AG04449 (cell line): ENCODE measurements at regions of chr16 and their contacts with region 1.

Region 1: DNA sequence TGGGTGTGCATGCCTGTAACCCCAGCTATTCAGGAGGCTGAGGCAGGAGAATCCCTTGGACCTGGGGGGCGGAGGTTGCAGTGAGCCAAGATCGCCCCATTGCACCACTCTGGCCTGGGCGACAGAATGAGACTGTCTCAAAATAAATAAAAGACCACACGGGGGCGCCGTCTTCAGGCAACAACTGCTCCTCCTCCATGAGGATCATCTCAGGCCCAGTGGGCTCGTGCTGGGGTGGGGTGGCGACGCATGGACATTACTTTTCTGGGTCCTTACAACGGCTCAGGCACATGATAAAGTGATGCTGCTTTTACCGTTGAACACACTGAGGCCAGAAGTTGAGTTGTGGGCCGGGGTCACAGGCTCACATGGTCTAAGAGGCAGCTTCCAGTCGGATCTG is 56.2 kb downstream of the PRMT7 start:
- DNase-seq: no peak
- H3K4me3 ChIP-seq: no peak overlapping the region
- CTCF ChIP-seq: peak; percentile 20

Region 2: DNA sequence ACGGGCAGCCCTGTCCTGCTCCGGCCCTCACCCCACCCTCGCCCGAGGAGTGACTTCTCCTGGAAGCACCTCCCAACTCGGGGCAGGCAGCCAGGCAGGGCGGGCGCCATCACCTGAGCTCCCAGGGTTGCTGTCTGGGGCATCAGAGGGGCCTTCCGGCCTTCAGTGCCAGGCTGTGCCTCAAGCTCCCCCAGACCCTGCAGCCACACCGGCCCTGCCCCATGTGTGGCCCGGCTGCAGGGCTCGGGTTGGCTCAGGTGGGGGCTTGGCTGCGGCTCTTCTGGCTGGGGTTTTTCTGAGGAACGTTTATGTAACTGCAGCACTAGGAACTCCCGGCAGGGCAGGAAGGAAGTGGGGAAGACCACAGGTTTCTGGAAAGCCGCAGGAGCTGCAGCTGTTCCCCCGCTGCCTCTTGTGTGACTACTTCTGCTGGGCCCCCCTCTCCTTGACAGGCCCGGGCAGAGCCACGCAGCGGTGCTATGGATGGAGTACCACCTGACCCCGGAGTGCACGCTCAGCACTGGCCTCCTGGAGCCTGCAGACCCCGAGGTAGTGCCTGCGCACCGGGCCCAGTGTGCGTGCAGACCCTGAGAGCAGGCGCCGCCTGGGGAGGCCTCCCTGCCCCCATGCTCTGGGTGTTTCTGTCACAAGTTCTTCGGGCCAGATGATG is 10.6 kb before region 1 on chr16:
- CTCF ChIA-PET with region 1: interaction called, 13 read pairs
- POLR2A ChIA-PET with region 1: no interaction called
- DNase-seq: no peak
- H3K4me3 ChIP-seq: no peak overlapping the region
- CTCF ChIP-seq: no peak

Region 3: DNA sequence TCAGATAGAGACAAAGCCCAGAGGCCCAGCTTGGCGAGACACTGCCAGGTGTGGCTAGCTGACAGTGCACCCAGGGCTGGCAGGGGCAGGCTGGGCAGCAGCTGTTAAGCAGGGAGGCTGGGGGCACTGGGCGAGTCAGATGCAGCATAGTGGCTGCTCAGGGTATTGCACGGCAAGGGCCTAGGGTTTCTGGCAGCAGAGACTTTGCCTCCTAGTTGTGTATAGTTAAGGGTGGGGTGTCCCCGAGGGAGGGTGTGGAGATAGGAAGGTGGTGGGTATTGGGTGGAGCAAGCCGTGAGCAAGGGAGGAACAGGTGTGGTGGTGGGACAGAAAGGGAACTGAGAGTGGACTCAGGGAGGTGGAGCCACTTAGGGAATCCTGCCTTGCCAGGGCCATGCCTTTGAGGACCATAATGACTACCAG is 15.3 kb after region 1 on chr16:
- CTCF ChIA-PET with region 1: interaction called, 13 read pairs
- POLR2A ChIA-PET with region 1: no interaction called
- DNase-seq: no peak
- H3K4me3 ChIP-seq: no peak overlapping the region
- CTCF ChIP-seq: no peak

Region 4: GRCh38 chr16:68470461-68471150 is 103.6 kb after region 1 on chr16:
- CTCF ChIA-PET with region 1: no interaction called
- POLR2A ChIA-PET with region 1: no interaction called
- DNase-seq: no peak
- H3K4me3 ChIP-seq: no peak overlapping the region
- CTCF ChIP-seq: no peak

Region 5: DNA sequence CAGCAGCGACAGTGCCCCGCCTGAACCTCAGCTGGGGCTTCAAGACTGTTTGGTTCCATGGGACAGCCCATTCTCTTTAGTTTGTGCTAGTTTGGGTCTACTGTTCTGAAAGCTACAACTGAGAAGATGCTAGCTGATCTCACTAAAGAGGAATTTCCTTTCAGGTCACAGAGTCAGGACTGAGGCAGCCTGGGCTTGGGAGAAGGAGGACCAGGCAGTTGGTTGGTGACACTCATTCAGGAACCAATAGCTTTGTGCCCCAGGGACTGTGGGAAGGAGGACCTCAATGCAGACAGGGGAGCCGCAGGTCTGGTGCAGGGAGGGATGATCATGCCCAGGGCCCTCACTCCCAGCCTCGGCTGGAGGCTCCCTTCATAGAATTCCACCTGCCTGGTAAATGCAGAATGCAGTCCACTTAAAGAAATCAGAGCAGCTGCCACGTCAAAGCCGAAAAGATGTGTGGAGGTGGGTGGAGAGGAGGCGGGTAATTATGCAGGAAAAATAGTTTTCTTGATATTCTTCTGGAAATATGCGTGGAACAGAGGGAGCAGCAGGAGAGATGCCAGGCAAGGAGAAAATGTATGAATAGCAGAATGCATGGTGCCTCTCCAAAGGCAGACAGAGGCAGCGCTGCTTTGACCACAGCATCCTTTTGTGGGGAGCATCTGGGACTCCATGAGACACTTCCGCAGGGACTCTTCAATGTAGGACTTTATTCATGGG is 139.5 kb after region 1 on chr16:
- CTCF ChIA-PET with region 1: interaction called, 46 read pairs
- POLR2A ChIA-PET with region 1: no interaction called
- DNase-seq: no peak
- H3K4me3 ChIP-seq: no peak overlapping the region
- CTCF ChIP-seq: no peak

Region 6: GRCh38 chr16:68884861-68885720 is 518.1 kb after region 1 on chr16:
- CTCF ChIA-PET with region 1: no interaction called
- POLR2A ChIA-PET with region 1: no interaction called
- DNase-seq: no peak
- H3K4me3 ChIP-seq: no peak overlapping the region
- CTCF ChIP-seq: no peak